Dorsolateral prefrontal cortex (tissue), 120 donors: ENCODE measurements at regions of chr7 and their contacts with region 1.

Region 1: DNA sequence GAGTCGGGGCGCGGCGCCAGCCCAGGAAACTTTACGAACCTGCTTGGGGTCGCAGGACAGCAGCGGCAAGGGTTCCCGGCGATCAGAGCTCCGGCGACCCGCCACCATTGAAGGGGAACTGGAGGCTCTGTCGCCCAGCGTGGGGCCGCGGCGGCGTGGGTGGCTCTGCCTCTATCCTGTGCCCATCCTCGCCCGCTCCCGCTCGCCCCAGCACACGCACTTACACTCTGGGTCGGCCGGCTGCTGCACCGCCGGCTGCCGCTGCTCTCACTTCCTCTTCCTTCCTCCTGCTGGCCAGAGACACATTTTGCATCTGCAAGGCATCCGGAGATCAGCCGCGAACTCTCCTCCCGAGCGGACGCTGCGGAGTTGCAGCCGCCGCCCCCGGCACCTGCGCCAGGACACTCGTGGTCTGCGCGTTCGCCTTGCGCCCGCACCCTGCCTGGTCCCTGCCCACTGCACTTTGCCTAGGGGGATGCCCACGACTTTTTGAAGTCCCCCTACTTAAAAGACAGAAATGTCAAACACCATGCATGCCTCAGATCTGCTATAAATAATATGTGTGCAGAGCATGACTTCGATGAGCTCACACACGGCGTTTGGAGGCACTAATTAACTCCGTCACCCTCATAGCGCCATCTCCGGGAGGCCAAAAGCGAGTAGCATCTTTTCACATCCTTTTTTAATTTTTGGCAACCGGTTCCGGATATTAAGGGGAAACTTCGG is at the start of gene ELMO1:
- DNase-seq: peak in 9 of 10 donors; percentile 53 to 75 (median 61)
- H3K4me3 ChIP-seq: peak within 1 kb of the TSS; percentile 53 to 97 (median 82)
- H3K27ac ChIP-seq: peak within 1 kb of the TSS; percentile 84 to 99 (median 97)
- H3K27me3 ChIP-seq: peaks cover 0 to 9% (median 0%) of the 10 kb centered on the region in 45 donors
- CTCF ChIP-seq: peak in 44 of 56 donors; percentile 8 to 63 (median 34)
- total RNA-seq, gene ELMO1: 96.6 to 391 (median 224) TPM

Region 2: DNA sequence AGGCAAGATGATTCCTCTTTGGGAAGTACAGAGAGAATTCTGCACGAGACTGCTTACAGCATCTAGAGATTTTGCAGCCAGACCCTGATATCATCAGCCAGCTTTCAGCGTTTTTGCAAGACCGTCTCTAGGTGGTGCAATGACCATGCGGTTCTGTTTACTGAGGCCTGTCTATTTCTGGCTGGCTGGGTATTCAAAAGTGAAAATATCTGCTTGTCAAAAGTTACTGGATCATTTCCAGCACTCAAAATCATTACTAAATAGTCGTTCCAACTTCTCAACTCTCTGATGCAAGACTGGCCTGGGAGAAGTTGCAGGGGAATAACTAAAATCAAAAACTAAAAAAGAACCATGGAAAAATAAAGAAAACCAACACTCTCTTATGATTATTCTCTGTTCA is 240.3 kb before region 1 on chr7:
- intact Hi-C with region 1: loop called (anchors 5 kb)
- DNase-seq: peak in 9 of 10 donors; percentile 24 to 76 (median 66)
- H3K4me3 ChIP-seq: peak overlapping the region in 1 of 59 donors; percentile 4
- H3K27ac ChIP-seq: peak overlapping the region; percentile 2 to 95 (median 84)
- H3K27me3 ChIP-seq: no peaks in the 10 kb centered on the region
- CTCF ChIP-seq: peak; percentile 47 to 88 (median 75)

Region 3: DNA sequence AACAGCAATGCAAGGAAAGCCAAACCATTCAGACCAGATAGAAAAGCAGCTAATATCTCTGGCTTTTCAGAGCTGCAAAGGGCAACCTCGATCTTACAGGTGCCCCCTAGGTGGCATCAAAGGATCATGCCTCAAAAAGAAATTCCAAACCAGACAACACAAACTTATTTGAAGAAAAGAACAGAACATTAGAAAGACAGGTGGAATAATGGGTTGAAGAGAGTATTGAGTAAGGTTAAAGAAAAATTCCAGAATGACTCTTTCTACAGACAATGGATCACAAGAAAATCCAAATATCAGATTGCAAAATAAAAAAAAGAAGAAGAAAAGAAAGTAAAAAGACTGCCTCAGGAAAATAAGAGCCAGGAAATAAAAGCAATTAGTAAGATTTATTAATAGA is 213.9 kb before region 1 on chr7:
- intact Hi-C with region 1: loop called in 1 of 2 experiments (anchors 5 kb)
- DNase-seq: peak in 1 of 10 donors; percentile 11
- H3K4me3 ChIP-seq: no peak overlapping the region
- H3K27ac ChIP-seq: peak overlapping the region in 56 of 59 donors; percentile 14 to 100 (median 82)
- H3K27me3 ChIP-seq: peaks cover 0 to 4% (median 0%) of the 10 kb centered on the region in 45 donors
- CTCF ChIP-seq: peak; percentile 18 to 83 (median 69)

Region 4: GRCh38 chr7:37284805-37285231 is 164.0 kb before region 1 on chr7:
- intact Hi-C with region 1: loop called (anchors 1 to 2 kb)
- DNase-seq: peak in 9 of 10 donors; percentile 48 to 82 (median 73)
- H3K4me3 ChIP-seq: no peak overlapping the region
- H3K27ac ChIP-seq: peak overlapping the region; percentile 74 to 100 (median 98)
- H3K27me3 ChIP-seq: no peaks in the 10 kb centered on the region
- CTCF ChIP-seq: peak; percentile 64 to 97 (median 80)

Region 5: GRCh38 chr7:37385787-37386186 is 63.0 kb before region 1 on chr7:
- intact Hi-C with region 1: loop called in 1 of 2 experiments (anchors 5 kb)
- DNase-seq: no peak
- H3K4me3 ChIP-seq: no peak overlapping the region
- H3K27ac ChIP-seq: peak overlapping the region in 19 of 59 donors; percentile 7 to 56 (median 24)
- H3K27me3 ChIP-seq: no peaks in the 10 kb centered on the region
- CTCF ChIP-seq: no peak

Region 6: DNA sequence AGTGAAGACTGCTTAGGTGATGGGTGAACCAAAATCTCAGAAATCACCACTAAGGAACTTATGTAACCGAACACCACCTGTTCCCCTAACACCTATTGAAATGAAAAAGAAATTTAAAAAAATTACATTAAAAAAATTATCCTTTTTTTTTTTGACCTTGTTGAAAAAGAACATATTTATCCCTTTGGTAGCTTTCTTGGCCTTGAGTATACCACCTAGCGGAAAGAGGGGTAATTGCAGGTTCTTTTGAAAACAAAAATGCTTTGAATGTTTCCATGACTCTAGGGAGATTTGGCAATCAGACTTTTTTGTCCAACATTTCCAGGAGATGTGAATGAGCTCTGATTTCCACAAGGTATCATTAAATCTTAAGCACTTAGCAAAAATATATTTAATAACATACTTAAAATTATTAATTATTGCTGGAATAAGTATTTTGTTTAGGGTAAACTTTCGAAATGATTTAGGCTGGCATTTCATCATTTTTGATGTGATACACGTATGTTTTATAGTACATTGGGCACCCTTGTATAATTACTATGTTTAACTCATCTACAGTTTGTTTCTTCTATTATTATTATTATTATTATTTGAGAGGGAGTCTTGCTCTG is 46.9 kb after region 1 on chr7:
- intact Hi-C with region 1: loop called (anchors 1 to 5 kb)
- DNase-seq: no peak
- H3K4me3 ChIP-seq: no peak overlapping the region
- H3K27ac ChIP-seq: peak overlapping the region in 39 of 59 donors; percentile 2 to 96 (median 87)
- H3K27me3 ChIP-seq: no peaks in the 10 kb centered on the region
- CTCF ChIP-seq: peak; percentile 60 to 90 (median 77)

Region 7: GRCh38 chr7:37833107-37833817 is 384.5 kb after region 1 on chr7:
- intact Hi-C with region 1: loop called in 1 of 2 experiments (anchors 10 kb)
- DNase-seq: peak in 7 of 10 donors; percentile 28 to 57 (median 38)
- H3K4me3 ChIP-seq: peak overlapping the region; percentile 22 to 71 (median 53)
- H3K27ac ChIP-seq: peak overlapping the region in 39 of 59 donors; percentile 4 to 88 (median 49)
- H3K27me3 ChIP-seq: peaks cover 0 to 4% (median 0%) of the 10 kb centered on the region in 45 donors
- CTCF ChIP-seq: peak; percentile 73 to 94 (median 84)